ENCODE measurements at regions of chr6 and their contacts with region 1.

Region 1: GRCh38 chr6:132715204-132715603 is 1.3 kb upstream of the VNN1 start:
- DNase-seq: peak; percentile 64
- H3K4me3 ChIP-seq: no peak overlapping the region
- H3K27ac ChIP-seq: no peak overlapping the region
- H3K4me1 ChIP-seq: no peaks in the 10 kb centered on the region
- H3K27me3 ChIP-seq: no peaks in the 10 kb centered on the region
- CTCF ChIP-seq: peak; percentile 69 to 78

Region 2: GRCh38 chr6:132780770-132781371 is 65.7 kb after region 1 on chr6:
- CTCF ChIA-PET with region 1: no interaction called
- dilution Hi-C with region 1: no loop called
- in situ Hi-C with region 1: no loop called
- intact Hi-C with region 1: loop called (anchors 5 kb)
- DNase-seq: peak; percentile 1
- H3K4me3 ChIP-seq: no peak overlapping the region
- H3K27ac ChIP-seq: no peak overlapping the region
- H3K4me1 ChIP-seq: no peaks in the 10 kb centered on the region
- H3K27me3 ChIP-seq: no peaks in the 10 kb centered on the region
- CTCF ChIP-seq: peak; percentile 17 to 47